Psoas muscle (tissue), 8 donors: ENCODE measurements at regions of chr6 and their contacts with region 1.

Region 1: DNA sequence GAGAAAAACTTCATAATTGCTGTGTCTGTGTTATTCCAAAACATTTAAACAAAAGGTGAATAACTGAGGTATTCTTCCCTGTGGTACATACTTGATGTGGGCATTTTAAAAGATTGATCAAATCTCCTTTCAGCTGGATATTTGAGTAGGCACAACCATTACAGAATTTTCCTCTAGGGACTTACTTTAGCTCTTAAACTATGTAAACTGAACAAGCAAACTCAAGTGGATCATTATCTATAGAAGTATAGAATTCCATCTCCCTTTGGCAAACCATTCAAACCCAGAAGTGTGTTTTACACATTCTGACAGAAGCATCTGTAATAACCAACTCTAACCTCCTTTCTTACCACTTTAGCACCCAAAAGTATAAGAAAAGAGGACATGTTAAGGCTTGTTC is 241.4 kb downstream of the ESR1 start:
- DNase-seq: no peak
- ATAC-seq: no peak
- H3K4me3 ChIP-seq: no peak overlapping the region
- H3K27ac ChIP-seq: no peak overlapping the region
- H3K4me1 ChIP-seq: peaks cover 8% of the 10 kb centered on the region
- H3K27me3 ChIP-seq: no peaks in the 10 kb centered on the region
- CTCF ChIP-seq: no peak

Region 2: DNA sequence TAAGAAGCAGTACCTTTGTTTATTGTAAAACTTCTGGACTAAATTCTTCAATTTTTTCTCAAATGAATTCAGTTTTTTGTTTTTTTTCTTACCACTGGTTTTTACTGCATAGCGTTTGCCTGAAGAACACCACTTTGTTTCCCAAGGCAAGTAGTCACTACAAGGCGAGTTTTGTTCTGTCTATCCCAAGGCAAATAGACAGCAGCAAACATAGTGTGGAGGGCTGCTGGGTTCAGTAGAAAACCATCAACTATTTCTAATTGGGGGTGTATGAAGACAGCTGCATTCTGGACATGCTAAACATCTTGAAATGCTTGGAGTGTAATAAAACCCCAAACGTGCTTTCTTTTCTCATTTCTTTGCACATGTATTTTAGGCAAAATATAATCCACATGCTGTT is 44.0 kb before region 1 on chr6:
- intact Hi-C with region 1: loop called in 1 of 2 experiments (anchors 1 kb)
- DNase-seq: no peak
- ATAC-seq: no peak
- H3K4me3 ChIP-seq: no peak overlapping the region
- H3K27ac ChIP-seq: no peak overlapping the region
- H3K4me1 ChIP-seq: peaks cover 23% of the 10 kb centered on the region
- H3K27me3 ChIP-seq: no peaks in the 10 kb centered on the region
- CTCF ChIP-seq: no peak

Region 3: GRCh38 chr6:152070556-152070955 is 21.6 kb after region 1 on chr6:
- intact Hi-C with region 1: no loop called
- DNase-seq: no peak
- ATAC-seq: no peak
- H3K4me3 ChIP-seq: no peak overlapping the region
- H3K27ac ChIP-seq: peak overlapping the region; percentile 63
- H3K4me1 ChIP-seq: peaks cover 18% of the 10 kb centered on the region
- H3K27me3 ChIP-seq: no peaks in the 10 kb centered on the region
- CTCF ChIP-seq: no peak

Region 4: DNA sequence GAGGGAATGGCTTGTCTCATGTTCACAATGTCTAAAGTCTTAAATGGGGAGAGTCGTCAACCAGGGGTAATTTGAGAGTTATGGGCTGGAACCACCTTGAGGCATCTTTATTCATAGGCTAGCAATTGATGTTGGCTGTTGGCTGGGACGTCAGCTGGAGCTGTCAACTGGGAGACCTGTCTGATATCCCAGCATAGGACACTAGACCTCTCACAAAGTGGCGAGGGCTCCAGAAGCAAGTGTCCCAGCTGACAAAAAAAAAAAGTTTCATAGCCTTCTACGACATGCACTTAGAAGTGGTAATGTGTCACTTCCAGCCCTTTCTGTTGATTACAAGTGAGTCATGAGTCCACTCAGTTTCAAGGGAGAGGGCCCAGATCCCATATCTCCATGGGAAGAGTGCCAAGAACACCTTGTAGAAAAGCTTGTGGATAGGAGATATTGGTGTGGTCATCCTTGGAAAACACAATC is 36.6 kb after region 1 on chr6:
- intact Hi-C with region 1: no loop called
- DNase-seq: no peak
- ATAC-seq: peak; percentile 68 to 80 (median 69)
- H3K4me3 ChIP-seq: no peak overlapping the region
- H3K27ac ChIP-seq: peak overlapping the region; percentile 46
- H3K4me1 ChIP-seq: peaks cover 14% of the 10 kb centered on the region
- H3K27me3 ChIP-seq: no peaks in the 10 kb centered on the region
- CTCF ChIP-seq: no peak

Region 5: GRCh38 chr6:152380993-152381898 is 332.3 kb after region 1 on chr6:
- intact Hi-C with region 1: no loop called
- DNase-seq: peak; percentile 75 to 85
- ATAC-seq: peak; percentile 78 to 84 (median 80)
- H3K4me3 ChIP-seq: peak overlapping the region; percentile 67
- H3K27ac ChIP-seq: peak overlapping the region; percentile 95
- H3K4me1 ChIP-seq: peaks cover 9% of the 10 kb centered on the region
- H3K27me3 ChIP-seq: no peaks in the 10 kb centered on the region
- CTCF ChIP-seq: no peak